Calu3 (cell line): ENCODE measurements at regions of chrX and their contacts with region 1.

Region 1: DNA sequence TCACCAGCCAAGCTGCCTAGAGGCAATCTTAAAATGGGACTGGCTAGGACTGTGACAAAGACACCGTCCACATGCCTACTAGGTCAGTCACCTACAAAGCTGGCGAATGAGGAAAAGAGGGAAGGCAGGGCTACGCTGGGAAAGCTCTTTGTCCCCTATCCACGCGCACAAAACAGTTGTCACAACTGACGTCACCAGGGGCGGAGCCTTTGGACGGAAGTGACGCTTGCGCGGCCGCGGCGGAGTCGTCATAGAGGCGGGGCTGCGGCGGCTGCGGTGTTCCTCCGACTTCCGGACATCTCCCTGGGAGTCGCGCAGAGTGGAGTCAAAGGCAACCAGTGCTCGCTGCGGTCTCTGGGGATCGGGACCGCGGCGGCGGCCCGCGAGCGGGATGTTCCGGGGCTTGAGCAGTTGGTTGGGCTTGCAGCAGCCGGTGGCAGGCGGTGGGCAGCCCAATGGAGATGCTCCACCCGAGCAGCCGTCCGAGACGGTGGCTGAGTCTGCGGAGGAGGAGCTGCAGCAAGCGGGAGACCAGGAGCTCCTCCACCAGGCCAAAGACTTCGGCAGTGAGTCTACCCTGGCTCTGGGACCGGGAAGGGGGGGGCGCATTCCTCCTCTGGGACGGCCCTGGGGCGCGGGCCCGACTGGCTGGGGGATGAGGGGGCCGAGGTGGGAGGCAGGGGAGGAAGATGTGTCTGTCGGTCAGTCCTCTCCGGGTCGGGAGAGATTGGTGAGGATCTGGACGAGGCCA is at the start of gene SYAP1:
- DNase-seq: peak; percentile 96
- H3K4me3 Mint-ChIP-seq: peak within 1 kb of the TSS; percentile 97
- H3K27ac Mint-ChIP-seq: peak within 1 kb of the TSS; percentile 98
- H3K4me1 Mint-ChIP-seq: no peaks in the 10 kb centered on the region
- H3K27me3 Mint-ChIP-seq: no peaks in the 10 kb centered on the region
- CTCF ChIP-seq: no peak
- total RNA-seq, gene SYAP1: 38.3 and 40.7 TPM in 2 replicates

Region 2: DNA sequence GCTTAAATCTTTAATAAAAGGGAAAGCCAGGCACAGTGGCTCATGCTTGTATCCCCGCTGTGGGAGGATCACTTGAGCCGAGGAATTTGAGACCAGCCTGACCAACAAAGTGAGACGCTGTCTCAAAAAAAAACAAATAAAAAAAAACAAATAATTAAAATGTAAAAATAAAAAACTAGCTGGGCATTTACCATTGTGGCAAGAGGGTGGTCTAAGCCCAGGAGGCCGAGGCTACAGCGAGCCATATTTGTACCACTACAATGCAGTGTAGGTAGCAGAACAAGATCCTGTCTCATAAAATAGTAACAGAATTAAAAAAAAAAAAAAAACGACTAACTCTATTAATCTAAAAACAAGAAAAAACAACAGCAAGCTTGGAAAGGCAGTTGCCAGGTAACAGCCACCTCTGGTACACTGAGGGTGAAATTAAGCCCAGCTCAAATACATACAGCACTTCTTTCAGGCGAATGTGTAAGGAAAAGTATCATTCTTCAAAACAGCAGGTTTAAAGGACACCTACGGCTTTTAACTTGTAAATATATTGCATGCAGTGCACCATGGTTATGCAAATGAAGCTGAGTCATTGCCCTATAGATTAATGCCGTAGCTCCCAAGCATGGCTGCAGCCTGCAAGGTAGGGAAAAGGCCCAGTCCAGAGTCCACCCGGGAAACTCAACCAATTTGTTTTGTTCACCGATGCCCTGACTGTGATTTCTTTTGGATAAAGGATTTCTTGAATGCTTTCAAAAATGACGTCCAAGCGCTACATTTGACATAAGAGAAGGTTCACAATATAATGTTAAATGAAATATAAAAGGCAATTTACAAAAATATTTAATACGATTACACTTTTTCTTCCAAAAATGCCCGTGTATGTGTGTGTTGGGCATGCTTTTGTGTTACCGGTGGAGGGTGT is 52.2 kb after region 1 on chrX:
- CTCF ChIA-PET with region 1: interaction called, 7 read pairs
- intact Hi-C with region 1: loop called (anchors 10 kb)
- DNase-seq: peak; percentile 50
- H3K4me3 Mint-ChIP-seq: no peak overlapping the region
- H3K27ac Mint-ChIP-seq: peak overlapping the region; percentile 96
- H3K4me1 Mint-ChIP-seq: no peaks in the 10 kb centered on the region
- H3K27me3 Mint-ChIP-seq: no peaks in the 10 kb centered on the region
- CTCF ChIP-seq: no peak